Naive thymus-derived CD4-positive, alpha-beta T cell (primary cell): ENCODE measurements at regions of chr16 and their contacts with region 1.

Region 1: DNA sequence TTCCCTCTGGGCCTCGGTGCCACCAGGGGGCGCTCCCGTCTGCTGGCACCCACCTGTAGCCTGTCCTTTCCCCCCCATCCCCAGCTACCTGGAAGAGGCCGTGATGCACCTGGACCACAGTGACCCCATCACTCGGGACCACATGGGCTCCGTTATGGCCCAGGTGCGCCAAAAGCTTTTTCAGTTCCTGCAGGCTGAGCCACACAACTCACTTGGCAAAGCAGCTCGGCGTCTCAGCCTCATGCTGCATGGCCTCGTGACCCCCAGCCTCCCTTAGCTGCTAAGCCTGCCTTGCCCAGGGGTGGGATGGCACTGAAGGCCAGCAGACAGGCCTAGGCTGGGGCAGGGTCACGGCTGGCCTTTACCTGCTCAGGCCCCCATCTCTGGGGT is 818 bp upstream of the NRN1L start:
- DNase-seq: peak; percentile 62 to 83 (median 74)
- ATAC-seq: peak; percentile 84
- H3K4me3 ChIP-seq: no peak overlapping the region
- H3K4me3 Mint-ChIP-seq: no peak overlapping the region
- H3K27ac ChIP-seq: no peak overlapping the region
- H3K27ac Mint-ChIP-seq: peak overlapping the region in 4 of 9 donors; percentile 19 to 42 (median 36)
- H3K4me1 ChIP-seq: no peaks in the 10 kb centered on the region
- H3K4me1 Mint-ChIP-seq: peaks cover 0 to 6% (median 0%) of the 10 kb centered on the region in 7 donors
- H3K27me3 ChIP-seq: no peaks in the 10 kb centered on the region
- H3K27me3 Mint-ChIP-seq: no peaks in the 10 kb centered on the region

Region 2: GRCh38 chr16:67928561-67929364 is 44.9 kb after region 1 on chr16:
- CTCF ChIA-PET with region 1: interaction called, 11 read pairs
- POLR2A ChIA-PET with region 1: no interaction called
- intact Hi-C with region 1: loop called (anchors 1 kb)
- DNase-seq: peak; percentile 53 to 77 (median 73)
- ATAC-seq: peak; percentile 86
- H3K4me3 ChIP-seq: no peak overlapping the region
- H3K4me3 Mint-ChIP-seq: peak overlapping the region in 1 of 10 donors; percentile 45
- H3K27ac ChIP-seq: no peak overlapping the region
- H3K27ac Mint-ChIP-seq: peak overlapping the region in 4 of 9 donors; percentile 6 to 67 (median 56)
- H3K4me1 ChIP-seq: no peaks in the 10 kb centered on the region
- H3K4me1 Mint-ChIP-seq: peaks cover 0 to 10% (median 7%) of the 10 kb centered on the region in 7 donors
- H3K27me3 ChIP-seq: no peaks in the 10 kb centered on the region
- H3K27me3 Mint-ChIP-seq: no peaks in the 10 kb centered on the region

Region 3: DNA sequence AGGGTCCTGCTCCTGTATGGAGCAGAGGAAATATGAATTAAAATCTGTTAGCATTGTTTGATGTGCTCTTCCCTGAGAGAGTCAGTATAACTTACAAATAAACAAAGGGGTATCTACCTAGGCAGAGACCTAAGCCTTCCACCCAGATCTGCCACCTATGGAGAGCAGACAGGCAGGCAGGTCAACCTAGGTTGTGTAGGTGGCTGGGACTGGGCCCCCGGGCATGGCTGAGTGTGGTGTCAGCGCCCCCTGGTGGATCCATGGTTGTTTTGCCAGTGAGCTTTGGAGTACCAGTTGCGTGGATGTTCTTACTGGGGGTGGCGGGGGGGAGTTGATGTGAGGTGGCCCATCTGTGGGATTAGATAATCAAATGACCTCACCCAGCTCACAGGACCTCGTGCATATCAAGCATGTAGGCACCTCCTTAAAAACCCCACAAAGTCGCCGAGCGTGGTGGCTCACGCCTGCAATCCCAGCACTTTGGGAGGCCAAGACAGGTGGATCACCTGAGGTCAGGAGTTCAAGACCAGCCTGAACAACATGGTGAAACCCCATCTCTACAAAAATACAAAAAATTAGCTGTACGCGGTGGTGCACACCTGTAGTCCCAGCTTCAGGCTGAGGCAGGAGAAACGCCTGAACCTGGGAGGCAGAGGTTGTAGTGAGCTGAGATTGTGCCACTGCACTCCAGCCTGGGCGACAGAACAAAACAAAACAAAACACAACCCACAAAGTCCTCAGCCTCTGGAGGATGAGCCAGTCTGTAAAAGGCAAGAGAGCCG is 156.8 kb after region 1 on chr16:
- CTCF ChIA-PET with region 1: interaction called, 10 read pairs
- POLR2A ChIA-PET with region 1: interaction called, 5 read pairs
- intact Hi-C with region 1: loop called (anchors 1 kb)
- DNase-seq: peak; percentile 81 to 95 (median 87)
- ATAC-seq: peak; percentile 100
- H3K4me3 ChIP-seq: no peak overlapping the region
- H3K4me3 Mint-ChIP-seq: peak overlapping the region in 1 of 10 donors; percentile 9
- H3K27ac ChIP-seq: peak overlapping the region; percentile 26
- H3K27ac Mint-ChIP-seq: peak overlapping the region; percentile 28 to 87 (median 61)
- H3K4me1 ChIP-seq: peaks cover 4 to 5% of the 10 kb centered on the region in 2 donors
- H3K4me1 Mint-ChIP-seq: peaks cover 5 to 26% (median 18%) of the 10 kb centered on the region in 7 donors
- H3K27me3 ChIP-seq: no peaks in the 10 kb centered on the region
- H3K27me3 Mint-ChIP-seq: no peaks in the 10 kb centered on the region